Esophagus squamous epithelium (tissue), 5 donors: ENCODE measurements at regions of chr1 and their contacts with region 1.

Region 1: DNA sequence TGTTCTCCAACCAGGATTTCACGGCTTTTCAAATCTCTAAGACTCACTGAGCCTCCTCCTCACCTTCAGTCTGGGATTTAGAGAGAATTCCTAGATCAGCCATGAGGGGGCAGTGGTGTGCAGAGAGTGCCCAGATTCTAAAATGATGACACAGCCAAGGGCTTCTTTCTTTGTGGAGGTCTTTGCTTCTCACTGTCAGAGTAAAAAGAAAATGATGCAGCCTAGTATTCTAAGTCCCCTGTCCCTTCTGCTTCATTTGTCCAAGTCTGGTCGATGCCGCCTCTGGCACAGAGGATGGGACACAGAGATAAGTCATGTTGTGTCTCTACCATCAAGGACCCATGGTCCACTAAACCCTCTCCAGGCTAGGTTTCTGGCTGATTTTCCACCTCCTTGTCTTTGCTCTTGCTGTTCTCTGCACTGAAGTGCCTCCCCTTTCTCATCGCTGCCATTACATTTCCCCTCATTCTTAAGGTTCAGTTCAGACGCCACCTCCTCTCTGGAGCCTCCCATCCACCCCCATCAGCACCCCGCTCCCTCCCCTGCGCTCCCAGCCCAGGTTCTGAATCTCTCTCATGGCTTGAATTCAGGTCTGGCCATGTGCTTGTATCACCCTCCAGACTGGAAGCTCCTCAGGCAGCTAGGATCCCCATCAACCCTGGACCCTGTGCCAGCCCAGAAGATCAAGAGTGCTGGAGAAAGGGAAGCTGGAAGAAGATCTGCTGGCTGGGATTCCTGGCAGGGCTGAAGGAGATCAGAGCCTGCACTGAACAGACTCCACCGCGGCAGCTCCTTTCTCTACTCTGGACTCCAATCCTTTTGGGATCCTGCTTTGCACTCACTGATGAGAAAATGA is 12.0 kb upstream of the TINAGL1 start:
- DNase-seq: no peak
- H3K4me3 ChIP-seq: no peak overlapping the region
- H3K27ac ChIP-seq: peak overlapping the region in 1 of 4 donors; percentile 15
- H3K4me1 ChIP-seq: peaks cover 0 to 17% (median 0%) of the 10 kb centered on the region in 3 donors
- H3K27me3 ChIP-seq: peaks cover 0 to 27% (median 0%) of the 10 kb centered on the region in 4 donors
- CTCF ChIP-seq: peak; percentile 59 to 90 (median 86)
- POLR2A ChIP-seq: no peak

Region 2: GRCh38 chr1:31595836-31596736 is 31.7 kb after region 1 on chr1:
- intact Hi-C with region 1: loop called (anchors 5 kb)
- DNase-seq: no peak
- H3K4me3 ChIP-seq: no peak overlapping the region
- H3K27ac ChIP-seq: peak overlapping the region in 1 of 4 donors; percentile 25
- H3K4me1 ChIP-seq: peaks cover 0 to 3% (median 0%) of the 10 kb centered on the region in 3 donors
- H3K27me3 ChIP-seq: no peaks in the 10 kb centered on the region
- CTCF ChIP-seq: no peak
- POLR2A ChIP-seq: no peak